ENCODE measurements at regions of chr10 and their contacts with region 1.

Region 1: GRCh38 chr10:775245-776075 is 86.0 kb upstream of the DIP2C start:
- DNase-seq: peak in 1 of 6 donors; percentile 50
- ATAC-seq: peak in 1 of 4 donors; percentile 57
- H3K4me3 ChIP-seq: no peak overlapping the region
- H3K27ac ChIP-seq: no peak overlapping the region
- H3K4me1 ChIP-seq: no peaks in the 10 kb centered on the region
- H3K27me3 ChIP-seq: no peaks in the 10 kb centered on the region
- CTCF ChIP-seq: no peak

Region 2: DNA sequence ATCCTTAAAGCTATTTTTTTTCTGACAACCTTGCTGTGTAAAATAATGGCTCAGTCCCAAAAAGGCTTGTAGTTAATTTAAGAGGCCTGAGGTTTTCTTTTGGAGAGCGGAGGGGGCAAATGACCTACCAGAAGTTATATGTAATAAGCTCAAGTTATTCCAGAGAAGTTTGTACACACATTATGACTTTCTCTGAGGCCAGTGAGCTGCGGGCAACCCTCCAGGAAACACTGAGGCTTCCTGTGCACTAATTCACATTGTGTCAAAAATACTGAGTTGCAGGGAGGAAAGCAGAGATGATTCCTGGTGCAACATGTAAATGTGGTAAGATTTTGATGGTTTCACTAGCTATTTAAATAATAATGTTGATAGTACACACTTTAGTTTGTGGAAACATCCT is 274.6 kb before region 1 on chr10:
- intact Hi-C with region 1: loop called in 1 of 3 experiments (anchors 10 kb)
- DNase-seq: peak in 1 of 6 donors; percentile 15
- ATAC-seq: no peak
- H3K4me3 ChIP-seq: no peak overlapping the region
- H3K27ac ChIP-seq: no peak overlapping the region
- H3K4me1 ChIP-seq: no peaks in the 10 kb centered on the region
- H3K27me3 ChIP-seq: no peaks in the 10 kb centered on the region
- CTCF ChIP-seq: no peak

Region 3: GRCh38 chr10:822661-823367 is 47.4 kb after region 1 on chr10:
- intact Hi-C with region 1: no loop called
- DNase-seq: no peak
- ATAC-seq: no peak
- H3K4me3 ChIP-seq: no peak overlapping the region
- H3K27ac ChIP-seq: no peak overlapping the region
- H3K4me1 ChIP-seq: no peaks in the 10 kb centered on the region
- H3K27me3 ChIP-seq: no peaks in the 10 kb centered on the region
- CTCF ChIP-seq: no peak

Measured in pancreas (tissue), 10 donors.